H1 (cell line): ENCODE measurements at regions of chr10 and their contacts with region 1.

Region 1: DNA sequence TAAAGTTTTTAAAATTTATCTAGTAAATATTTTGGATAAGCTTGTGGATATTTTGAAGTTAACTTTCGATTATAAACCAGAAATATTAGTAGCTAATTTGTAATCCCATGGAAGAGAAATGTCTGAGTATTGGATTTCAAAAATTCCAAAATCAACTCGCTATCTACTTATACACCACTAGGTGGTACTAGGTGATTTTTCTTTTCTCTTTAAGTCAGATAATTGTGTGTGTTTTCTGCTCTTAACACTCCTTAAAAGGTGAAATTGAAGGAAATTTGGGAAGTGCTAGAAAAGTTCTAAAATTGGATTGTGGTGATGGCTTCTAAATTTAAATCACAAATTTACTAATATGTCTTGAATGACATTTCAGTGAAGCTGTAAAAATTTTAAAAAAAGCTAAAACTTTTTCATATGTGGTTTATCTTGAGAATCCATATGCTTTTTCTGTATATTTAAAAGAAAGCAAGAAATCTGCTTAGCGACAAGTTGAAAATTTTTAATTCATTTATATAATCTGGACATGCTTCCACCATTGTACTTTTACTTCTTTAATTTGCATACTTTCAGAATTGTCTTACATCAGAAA is 90.2 kb downstream of the IPMK start:
- DNase-seq: no peak
- H3K4me3 ChIP-seq: no peak overlapping the region
- H3K27ac ChIP-seq: no peak overlapping the region
- H3K4me1 ChIP-seq: no peaks in the 10 kb centered on the region
- H3K27me3 ChIP-seq: no peaks in the 10 kb centered on the region
- CTCF ChIP-seq: peak in 2 of 3 experiments; percentile 16 to 38; a peak in 2 of 4 replicates
- EP300 ChIP-seq: no peak
- POLR2A ChIP-seq: no peak
- RAD21 ChIP-seq: peak; percentile 55 to 69

Region 2: GRCh38 chr10:57898237-57898636 is 279.2 kb before region 1 on chr10:
- CTCF ChIA-PET with region 1: no interaction called
- POLR2A ChIA-PET with region 1: no interaction called
- DNase-seq: peak in 1 of 2 experiments; percentile 10
- H3K4me3 ChIP-seq: peak overlapping the region in 1 of 4 experiments; percentile 11; a peak in 1 of 8 replicates
- H3K27ac ChIP-seq: no peak overlapping the region
- H3K4me1 ChIP-seq: peaks cover 0 to 4% (median under 1%) of the 10 kb centered on the region in 4 experiments; a peak in 4 of 7 replicates
- H3K27me3 ChIP-seq: no peaks in the 10 kb centered on the region
- CTCF ChIP-seq: no peak
- EP300 ChIP-seq: peak in 1 of 2 experiments; percentile 71; a peak in 1 of 3 replicates
- POLR2A ChIP-seq: no peak
- RAD21 ChIP-seq: no peak

Region 3: GRCh38 chr10:58189269-58189668 is 11.8 kb after region 1 on chr10:
- CTCF ChIA-PET with region 1: interaction called, 20 read pairs
- POLR2A ChIA-PET with region 1: no interaction called
- DNase-seq: no peak
- H3K4me3 ChIP-seq: no peak overlapping the region
- H3K27ac ChIP-seq: no peak overlapping the region
- H3K4me1 ChIP-seq: no peaks in the 10 kb centered on the region
- H3K27me3 ChIP-seq: no peaks in the 10 kb centered on the region
- CTCF ChIP-seq: no peak
- EP300 ChIP-seq: no peak
- POLR2A ChIP-seq: no peak
- RAD21 ChIP-seq: no peak

Region 4: GRCh38 chr10:58291538-58292174 is 114.2 kb after region 1 on chr10:
- CTCF ChIA-PET with region 1: interaction called, 105 read pairs
- POLR2A ChIA-PET with region 1: no interaction called
- DNase-seq: no peak
- H3K4me3 ChIP-seq: no peak overlapping the region
- H3K27ac ChIP-seq: no peak overlapping the region
- H3K4me1 ChIP-seq: no peaks in the 10 kb centered on the region
- H3K27me3 ChIP-seq: no peaks in the 10 kb centered on the region; a peak in 1 of 7 replicates
- CTCF ChIP-seq: peak in 2 of 3 experiments; percentile 38 to 51; a peak in 2 of 4 replicates
- EP300 ChIP-seq: no peak
- POLR2A ChIP-seq: no peak
- RAD21 ChIP-seq: peak; percentile 70 to 71

Region 5: DNA sequence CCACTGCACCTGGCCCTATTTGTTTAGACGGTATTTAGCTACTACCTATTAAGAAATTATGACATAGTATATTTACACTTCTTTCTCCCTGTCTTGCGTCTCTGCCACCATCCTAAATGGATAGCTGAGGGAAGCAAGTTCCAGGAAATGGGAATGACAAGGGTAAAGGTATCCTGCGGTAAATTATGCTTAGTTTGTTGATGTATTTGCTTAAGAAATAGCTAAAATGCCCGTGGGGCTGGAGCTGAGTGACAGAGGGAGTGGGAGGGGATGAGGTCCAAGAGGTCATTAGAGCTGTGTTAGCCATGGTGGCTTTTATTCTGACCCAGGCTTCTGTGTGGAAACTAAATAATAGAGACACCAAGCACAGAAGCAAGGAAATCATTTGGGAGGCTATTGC is 128.4 kb after region 1 on chr10:
- CTCF ChIA-PET with region 1: interaction called, 16 read pairs
- POLR2A ChIA-PET with region 1: no interaction called
- DNase-seq: no peak
- H3K4me3 ChIP-seq: no peak overlapping the region
- H3K27ac ChIP-seq: no peak overlapping the region
- H3K4me1 ChIP-seq: no peaks in the 10 kb centered on the region
- H3K27me3 ChIP-seq: no peaks in the 10 kb centered on the region
- CTCF ChIP-seq: no peak
- EP300 ChIP-seq: no peak
- POLR2A ChIP-seq: no peak
- RAD21 ChIP-seq: no peak